BJ (cell line): ENCODE measurements at regions of chr15 and their contacts with region 1.

Region 1: GRCh38 chr15:63752075-63752684 is 81.6 kb downstream of the HERC1 start:
- DNase-seq: no peak
- H3K4me3 ChIP-seq: no peak overlapping the region
- H3K27me3 ChIP-seq: no peaks in the 10 kb centered on the region
- CTCF ChIP-seq: peak; percentile 70

Region 2: GRCh38 chr15:63763476-63764123 is 11.4 kb after region 1 on chr15:
- CTCF ChIA-PET with region 1: interaction called, 11 read pairs
- POLR2A ChIA-PET with region 1: interaction called, 3 read pairs
- DNase-seq: no peak
- H3K4me3 ChIP-seq: no peak overlapping the region
- H3K27me3 ChIP-seq: no peaks in the 10 kb centered on the region
- CTCF ChIP-seq: no peak

Region 3: DNA sequence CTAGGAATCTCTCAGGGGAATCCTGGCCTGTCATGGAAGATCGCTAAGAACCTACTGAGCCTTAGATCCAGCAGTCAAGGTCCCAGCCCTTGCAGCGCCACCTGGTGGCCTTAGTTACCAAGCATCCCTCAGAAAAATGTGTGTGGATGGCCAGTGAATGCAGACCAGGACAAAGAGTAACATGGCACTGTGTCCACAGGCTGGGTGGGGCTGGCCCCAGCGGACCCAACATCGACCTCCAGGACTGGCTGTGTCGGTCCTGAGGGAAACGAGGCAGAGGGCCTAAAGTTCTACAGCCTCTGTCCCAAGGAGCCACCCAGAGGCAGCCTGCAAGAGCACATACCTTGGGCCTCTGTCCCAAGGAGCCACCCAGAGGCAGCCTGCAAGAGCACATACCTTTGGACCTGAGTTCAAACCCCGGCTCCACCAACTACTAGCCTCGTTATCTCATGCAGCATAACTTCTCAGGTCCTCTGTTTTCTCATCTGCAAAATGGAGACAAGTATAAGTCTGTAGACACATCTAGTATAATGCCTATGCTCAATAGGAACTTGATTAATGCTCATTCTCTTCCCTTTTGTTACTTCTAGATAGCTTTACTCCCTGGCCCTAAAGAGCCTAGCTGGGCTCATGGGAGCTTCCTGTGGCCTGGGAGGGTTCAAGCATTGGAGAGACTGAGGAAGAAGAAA is 139.0 kb after region 1 on chr15:
- CTCF ChIA-PET with region 1: interaction called, 39 read pairs
- POLR2A ChIA-PET with region 1: no interaction called
- DNase-seq: no peak
- H3K4me3 ChIP-seq: no peak overlapping the region
- H3K27me3 ChIP-seq: no peaks in the 10 kb centered on the region
- CTCF ChIP-seq: peak; percentile 87